ENCODE measurements at regions of chr3 and their contacts with region 1.

Region 1: DNA sequence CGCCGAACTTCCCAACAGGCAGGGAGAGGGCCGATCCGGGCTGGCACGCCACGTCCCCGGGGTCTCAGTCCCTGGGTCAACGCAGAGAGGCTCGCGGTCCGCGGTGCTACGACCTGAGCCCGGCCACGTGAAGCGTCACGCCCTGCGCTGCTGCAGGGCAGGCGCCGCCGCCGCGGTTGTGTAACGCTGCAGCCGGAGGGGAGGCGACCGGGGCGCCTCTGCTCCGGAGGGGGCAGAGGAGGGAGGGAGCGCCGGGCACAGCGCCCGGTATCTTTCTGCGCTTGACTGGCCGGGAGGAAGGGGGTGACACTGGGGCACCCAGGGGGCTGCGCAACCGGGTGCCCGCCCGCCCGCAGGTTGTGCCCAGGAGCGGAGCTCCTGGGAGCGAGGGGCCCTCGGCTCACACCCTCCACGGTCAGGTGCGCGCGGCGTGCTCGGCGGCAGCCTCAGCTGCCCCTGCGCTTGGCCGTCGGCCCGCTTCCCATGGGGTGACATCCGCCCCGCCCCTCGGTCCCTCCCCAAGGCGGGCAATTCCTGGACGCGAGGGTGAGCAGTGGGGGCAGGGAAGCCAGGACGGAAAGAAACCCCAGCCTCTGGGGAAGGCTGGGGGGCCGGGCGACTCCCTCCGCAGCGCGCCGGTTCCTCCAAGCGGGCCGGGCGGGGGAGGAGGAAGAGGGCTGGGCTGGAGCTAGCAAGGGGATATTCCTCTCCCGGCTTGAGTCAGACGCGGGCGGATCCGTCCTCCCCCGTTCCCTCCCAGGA is 852 bp upstream of the BHLHE40 start:
- DNase-seq: peak; percentile 89 to 97
- H3K4me3 ChIP-seq: peak overlapping the region; percentile 69
- H3K4me1 ChIP-seq: peaks cover 23% of the 10 kb centered on the region
- H3K27me3 ChIP-seq: no peaks in the 10 kb centered on the region

Region 2: GRCh38 chr3:4303187-4304123 is 674.9 kb before region 1 on chr3 and contains the start of gene SETMAR:
- in situ Hi-C with region 1: loop called (anchors 25 kb)
- DNase-seq: peak; percentile 73 to 92
- H3K4me3 ChIP-seq: peak within 1 kb of the TSS; percentile 58
- H3K4me1 ChIP-seq: peaks cover 5% of the 10 kb centered on the region
- H3K27me3 ChIP-seq: no peaks in the 10 kb centered on the region